H1 (cell line): ENCODE measurements at regions of chr12 and their contacts with region 1.

Region 1: GRCh38 chr12:132342251-132343227 is 13.2 kb upstream of the GALNT9 start:
- DNase-seq: peak in 1 of 2 experiments; percentile 76
- H3K4me3 ChIP-seq: no peak overlapping the region
- H3K27ac ChIP-seq: no peak overlapping the region
- H3K4me1 ChIP-seq: peaks cover 0 to 2% (median 2%) of the 10 kb centered on the region in 4 experiments; a peak in 3 of 7 replicates
- H3K27me3 ChIP-seq: peaks cover 1 to 25% (median 12%) of the 10 kb centered on the region in 4 experiments
- CTCF ChIP-seq: peak in 2 of 3 experiments; percentile 93 to 99; a peak in 3 of 4 replicates
- EP300 ChIP-seq: no peak
- POLR2A ChIP-seq: no peak
- RAD21 ChIP-seq: peak; percentile 59 to 72

Region 2: GRCh38 chr12:132285991-132286681 is 56.4 kb before region 1 on chr12:
- CTCF ChIA-PET with region 1: interaction called, 30 read pairs
- POLR2A ChIA-PET with region 1: no interaction called
- DNase-seq: peak in 1 of 2 experiments; percentile 69
- H3K4me3 ChIP-seq: peak overlapping the region in 2 of 4 experiments; percentile 4 to 49; a peak in 2 of 8 replicates
- H3K27ac ChIP-seq: no peak overlapping the region
- H3K4me1 ChIP-seq: peaks cover 5 to 39% (median 31%) of the 10 kb centered on the region in 4 experiments
- H3K27me3 ChIP-seq: peaks cover 0 to 15% (median 8%) of the 10 kb centered on the region in 4 experiments; a peak in 4 of 7 replicates
- CTCF ChIP-seq: 0 out of 4 replicates have a peak, but pooled peaks of 1 of the 3 experiments have one; percentile 23
- EP300 ChIP-seq: no peak
- POLR2A ChIP-seq: no peak
- RAD21 ChIP-seq: peak in 1 of 2 experiments; percentile 28; a peak in 1 of 4 replicates

Region 3: GRCh38 chr12:132327351-132328171 is 15.0 kb before region 1 on chr12:
- CTCF ChIA-PET with region 1: interaction called, 10 read pairs
- POLR2A ChIA-PET with region 1: no interaction called
- DNase-seq: no peak
- H3K4me3 ChIP-seq: peak overlapping the region in 1 of 4 experiments; percentile 49; a peak in 2 of 8 replicates
- H3K27ac ChIP-seq: no peak overlapping the region
- H3K4me1 ChIP-seq: peaks cover 0 to 15% (median 2%) of the 10 kb centered on the region in 4 experiments; a peak in 6 of 7 replicates
- H3K27me3 ChIP-seq: peaks cover 12 to 65% (median 51%) of the 10 kb centered on the region in 4 experiments
- CTCF ChIP-seq: no peak
- EP300 ChIP-seq: no peak
- POLR2A ChIP-seq: no peak
- RAD21 ChIP-seq: no peak

Region 4: GRCh38 chr12:132356691-132357622 is 14.4 kb after region 1 on chr12:
- CTCF ChIA-PET with region 1: interaction called, 19 read pairs
- POLR2A ChIA-PET with region 1: no interaction called
- DNase-seq: peak in 1 of 2 experiments; percentile 17
- H3K4me3 ChIP-seq: no peak overlapping the region
- H3K27ac ChIP-seq: no peak overlapping the region
- H3K4me1 ChIP-seq: peaks cover 0 to 13% (median 7%) of the 10 kb centered on the region in 4 experiments; a peak in 4 of 7 replicates
- H3K27me3 ChIP-seq: peaks cover 0 to 27% (median 13%) of the 10 kb centered on the region in 4 experiments; a peak in 4 of 7 replicates
- CTCF ChIP-seq: no peak
- EP300 ChIP-seq: no peak
- POLR2A ChIP-seq: no peak
- RAD21 ChIP-seq: no peak

Region 5: DNA sequence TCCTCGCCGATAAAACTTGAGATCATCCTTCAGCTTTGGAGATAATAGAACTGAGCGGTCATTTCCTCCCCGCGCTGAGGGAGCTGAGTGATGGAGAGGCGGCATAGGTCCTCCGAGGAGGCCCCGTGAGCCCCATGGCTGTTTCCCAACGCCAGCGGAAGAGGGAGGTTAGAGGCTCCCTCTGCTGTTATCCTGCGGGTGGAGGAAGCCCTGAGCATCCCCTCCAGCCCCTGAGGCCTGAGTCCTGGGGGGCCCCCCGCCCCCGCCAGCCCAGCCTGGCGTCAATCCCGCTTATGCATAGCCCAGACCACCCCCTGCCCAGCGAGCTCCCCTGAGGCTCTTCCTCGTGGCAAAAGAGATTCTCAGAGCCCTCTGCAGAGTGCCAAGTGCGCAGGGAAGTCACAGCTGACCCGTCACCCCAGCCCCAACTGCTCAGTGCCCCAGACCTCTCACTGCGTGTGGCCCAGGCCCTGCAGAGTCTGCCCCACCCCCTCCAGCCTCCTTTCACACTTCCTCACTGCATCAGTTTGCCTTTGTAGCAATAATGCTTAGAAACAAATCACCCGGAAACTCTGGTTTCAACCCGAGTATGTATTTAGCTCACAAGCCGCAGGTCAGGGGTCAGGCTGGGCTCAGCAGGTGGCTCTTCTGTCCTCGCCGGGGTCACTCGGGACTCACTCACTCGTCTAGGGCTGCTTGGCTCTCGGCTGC is 31.5 kb after region 1 on chr12:
- CTCF ChIA-PET with region 1: interaction called, 28 read pairs
- POLR2A ChIA-PET with region 1: no interaction called
- DNase-seq: no peak
- H3K4me3 ChIP-seq: no peak overlapping the region
- H3K27ac ChIP-seq: no peak overlapping the region
- H3K4me1 ChIP-seq: peaks cover 0 to 23% (median 7%) of the 10 kb centered on the region in 4 experiments; a peak in 6 of 7 replicates
- H3K27me3 ChIP-seq: peaks cover 6 to 60% (median 48%) of the 10 kb centered on the region in 4 experiments
- CTCF ChIP-seq: peak; percentile 23 to 25 (median 24); a peak in 3 of 4 replicates
- EP300 ChIP-seq: no peak
- POLR2A ChIP-seq: no peak
- RAD21 ChIP-seq: peak in 1 of 2 experiments; percentile 43; a peak in 3 of 4 replicates

Region 6: GRCh38 chr12:132429946-132430643 is 87.6 kb after region 1 on chr12:
- CTCF ChIA-PET with region 1: no interaction called
- POLR2A ChIA-PET with region 1: no interaction called
- DNase-seq: peak in 1 of 2 experiments; percentile 61
- H3K4me3 ChIP-seq: peak overlapping the region in 1 of 4 experiments; percentile 9; a peak in 1 of 8 replicates
- H3K27ac ChIP-seq: no peak overlapping the region
- H3K4me1 ChIP-seq: peaks cover 0 to 35% (median 21%) of the 10 kb centered on the region in 4 experiments; a peak in 6 of 7 replicates
- H3K27me3 ChIP-seq: peaks cover 14 to 64% (median 58%) of the 10 kb centered on the region in 4 experiments
- CTCF ChIP-seq: no peak
- EP300 ChIP-seq: no peak
- POLR2A ChIP-seq: no peak
- RAD21 ChIP-seq: no peak